Posterior vena cava (tissue), 2 donors: ENCODE measurements at regions of chr3 and their contacts with region 1.

Region 1: DNA sequence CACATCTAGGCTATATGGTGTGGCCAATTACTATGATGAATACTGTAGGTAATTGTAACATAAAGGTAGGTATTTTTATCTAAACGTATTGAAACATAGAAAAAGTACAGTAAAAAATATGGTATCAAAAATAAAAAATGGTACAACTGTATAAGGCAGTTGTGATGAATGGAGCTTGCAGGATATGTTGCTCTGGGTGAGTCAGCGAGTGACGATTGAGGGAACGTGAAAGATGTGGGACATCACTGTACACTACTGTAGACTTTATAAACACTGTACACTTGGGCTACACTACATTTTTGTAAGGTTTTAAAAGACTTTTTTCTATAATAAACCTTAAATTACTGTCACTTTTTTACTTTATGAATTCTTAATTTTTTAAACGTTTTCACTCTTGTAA is 10.3 kb downstream of the CTNNB1 start:
- DNase-seq: no peak

Region 2: DNA sequence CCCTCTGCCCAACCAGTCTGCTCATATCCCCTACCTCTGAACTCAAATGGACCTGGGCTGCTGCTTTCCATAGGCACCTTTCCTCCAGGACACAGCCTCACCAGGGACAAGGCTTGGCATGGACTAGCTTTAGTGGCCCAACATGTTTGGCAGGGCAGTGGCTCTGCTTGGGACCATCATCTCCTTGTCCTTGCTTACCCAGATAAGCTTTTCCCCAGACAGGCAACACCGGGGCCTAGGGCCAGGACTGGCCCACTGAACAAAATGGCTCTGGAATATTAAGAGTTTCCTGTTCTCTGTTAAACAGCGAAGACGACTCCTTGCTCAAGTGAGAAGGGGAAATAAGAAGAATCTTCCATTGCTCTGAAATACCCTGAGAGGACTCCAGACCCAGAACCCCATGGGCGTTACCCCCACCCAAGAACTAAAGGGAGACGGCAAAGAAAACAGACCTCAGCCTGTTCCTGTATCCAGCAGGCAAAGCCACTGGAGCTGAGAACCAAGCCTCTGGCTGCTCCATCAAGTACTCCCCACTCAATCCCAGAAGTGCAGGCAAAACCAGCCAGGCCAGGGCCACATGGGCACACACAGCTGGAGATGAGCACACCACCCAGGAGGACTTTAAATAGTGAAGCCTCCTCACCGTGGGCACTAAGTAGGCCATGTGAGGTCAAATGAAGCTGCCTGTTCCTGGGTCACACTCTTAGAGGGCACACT is 35.1 kb after region 1 on chr3:
- intact Hi-C with region 1: loop called in 1 of 2 experiments (anchors 2 kb)
- DNase-seq: no peak